Activated CD4-positive, alpha-beta memory T cell treated with anti-CD3 and anti-CD28 coated beads for 36 hours (primary cell): ENCODE measurements at regions of chr2 and their contacts with region 1.

Region 1: DNA sequence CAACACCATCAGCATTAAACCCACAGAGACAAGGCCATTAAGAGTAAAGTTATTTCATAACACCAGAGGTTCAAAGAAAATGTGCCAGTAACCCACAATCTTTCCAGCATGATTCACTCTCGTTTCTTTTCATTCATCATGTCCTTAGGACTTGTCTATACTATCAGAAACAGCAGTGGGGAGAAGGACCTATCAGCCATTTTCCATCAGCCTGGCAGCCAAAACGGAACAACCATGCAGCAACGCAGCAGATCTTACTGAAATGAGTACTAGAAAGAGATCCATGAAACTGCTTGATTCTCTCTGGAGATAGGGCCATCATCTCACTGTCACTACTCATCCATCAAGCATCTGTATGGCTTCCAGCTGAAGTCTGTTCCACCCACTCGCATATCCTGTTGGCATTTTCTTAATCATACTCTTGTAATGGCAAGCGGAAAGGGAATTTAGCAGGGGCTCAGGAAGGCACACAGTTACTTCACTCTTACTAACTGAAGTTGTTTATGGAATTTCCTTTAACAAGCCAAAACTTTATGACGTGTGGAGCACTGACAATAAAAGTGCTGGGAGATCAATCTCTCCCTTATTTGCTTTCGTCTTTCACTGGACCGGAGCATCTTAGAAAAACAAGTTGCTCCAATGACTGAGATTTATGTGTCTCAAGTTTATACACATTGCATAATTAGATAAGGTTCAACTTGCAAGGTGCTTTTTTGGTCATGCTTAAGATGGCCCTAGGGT is 69.7 kb downstream of the EPHA4 start:
- DNase-seq: peak; percentile 67
- H3K4me3 Mint-ChIP-seq: no peak overlapping the region
- H3K27ac Mint-ChIP-seq: peak overlapping the region; percentile 64
- H3K4me1 Mint-ChIP-seq: peaks cover 42% of the 10 kb centered on the region
- H3K27me3 Mint-ChIP-seq: no peaks in the 10 kb centered on the region

Region 2: DNA sequence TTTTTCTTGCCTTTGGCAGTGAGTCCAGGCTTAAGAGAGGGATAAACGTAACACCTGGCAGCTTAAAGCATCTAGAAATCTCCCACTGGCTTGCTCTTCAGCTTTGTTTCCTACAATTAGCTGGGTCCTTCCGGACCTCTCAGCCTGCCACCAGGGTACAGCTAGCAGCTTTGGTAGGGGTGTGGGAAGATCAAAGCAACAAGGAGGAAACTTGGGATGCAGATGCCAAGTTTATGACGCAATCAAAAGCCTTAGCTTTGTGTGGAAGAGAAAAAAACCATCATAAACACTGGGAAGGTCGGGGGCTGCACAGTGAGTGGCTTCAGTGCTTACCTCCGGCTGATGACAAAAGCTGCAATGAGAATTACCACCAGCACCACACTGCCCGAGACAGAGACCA is 47.2 kb before region 1 on chr2:
- CTCF ChIA-PET with region 1: no interaction called
- POLR2A ChIA-PET with region 1: no interaction called
- intact Hi-C with region 1: no loop called
- DNase-seq: no peak
- H3K4me3 Mint-ChIP-seq: no peak overlapping the region
- H3K27ac Mint-ChIP-seq: no peak overlapping the region
- H3K4me1 Mint-ChIP-seq: no peaks in the 10 kb centered on the region
- H3K27me3 Mint-ChIP-seq: no peaks in the 10 kb centered on the region

Region 3: DNA sequence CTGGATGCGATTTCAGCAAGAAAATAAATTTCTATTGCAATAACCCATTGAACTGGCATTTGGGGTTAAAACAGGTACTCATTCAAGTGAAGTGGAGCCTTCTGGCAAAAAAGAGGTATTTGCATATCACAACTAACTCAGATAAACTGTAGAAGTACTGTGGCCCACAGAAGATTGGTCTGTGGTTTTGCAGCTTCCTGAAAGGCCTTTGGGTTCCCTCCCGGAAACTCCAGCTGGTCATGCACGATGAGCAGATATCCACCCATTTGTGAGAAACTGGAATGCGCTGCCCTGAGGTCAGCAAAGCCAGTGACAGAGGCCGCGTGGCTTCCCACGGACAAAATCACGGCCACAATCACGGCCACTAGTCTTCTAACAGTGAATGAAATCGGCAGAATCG is 36.7 kb before region 1 on chr2:
- CTCF ChIA-PET with region 1: interaction called, 3 read pairs
- POLR2A ChIA-PET with region 1: no interaction called
- intact Hi-C with region 1: loop called (anchors 5 kb)
- DNase-seq: peak; percentile 14
- H3K4me3 Mint-ChIP-seq: no peak overlapping the region
- H3K27ac Mint-ChIP-seq: no peak overlapping the region
- H3K4me1 Mint-ChIP-seq: peaks cover 57% of the 10 kb centered on the region
- H3K27me3 Mint-ChIP-seq: no peaks in the 10 kb centered on the region

Region 4: DNA sequence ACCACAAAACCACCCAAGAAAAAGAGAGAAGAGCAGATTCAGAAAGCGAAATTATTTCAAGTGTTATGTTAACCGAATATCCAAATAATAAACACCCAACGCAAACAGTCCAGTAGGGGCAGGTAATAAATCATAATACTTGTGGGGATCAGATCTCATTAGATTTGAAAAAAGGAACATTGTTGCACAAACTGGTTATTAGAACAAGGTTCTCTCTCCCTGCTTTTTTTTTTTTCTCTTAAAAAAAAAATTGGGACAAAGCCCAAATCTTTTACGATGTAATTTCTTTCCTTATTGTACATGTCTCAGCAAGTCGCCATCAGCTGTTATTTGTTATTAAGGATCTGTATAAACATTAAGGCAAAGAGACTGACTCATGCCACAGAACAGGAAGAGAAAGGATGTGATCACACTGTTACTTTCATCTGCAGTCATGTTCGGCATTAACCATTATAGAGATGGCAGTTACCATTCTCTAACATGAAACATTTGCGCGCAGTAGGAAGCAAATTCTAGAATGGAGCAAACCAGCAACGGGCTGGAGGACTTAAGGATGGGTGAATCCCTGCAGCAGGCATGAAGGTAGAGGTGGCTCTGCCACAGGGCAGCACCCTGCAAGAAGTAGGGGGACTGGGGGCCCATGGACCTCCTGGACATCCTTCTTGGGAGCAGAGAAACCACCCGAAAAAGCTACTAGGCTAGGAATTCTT is 27.7 kb after region 1 on chr2:
- CTCF ChIA-PET with region 1: no interaction called
- POLR2A ChIA-PET with region 1: no interaction called
- intact Hi-C with region 1: loop called (anchors 1 kb)
- DNase-seq: no peak
- H3K4me3 Mint-ChIP-seq: peak overlapping the region; percentile 68
- H3K27ac Mint-ChIP-seq: peak overlapping the region; percentile 82
- H3K4me1 Mint-ChIP-seq: peaks cover 61% of the 10 kb centered on the region
- H3K27me3 Mint-ChIP-seq: no peaks in the 10 kb centered on the region

Region 5: GRCh38 chr2:221554769-221555493 is 52.5 kb after region 1 on chr2:
- CTCF ChIA-PET with region 1: no interaction called
- POLR2A ChIA-PET with region 1: no interaction called
- intact Hi-C with region 1: loop called (anchors 1 kb)
- DNase-seq: peak; percentile 58
- H3K4me3 Mint-ChIP-seq: peak overlapping the region; percentile 50
- H3K27ac Mint-ChIP-seq: peak overlapping the region; percentile 77
- H3K4me1 Mint-ChIP-seq: peaks cover 62% of the 10 kb centered on the region
- H3K27me3 Mint-ChIP-seq: no peaks in the 10 kb centered on the region

Region 6: GRCh38 chr2:221641181-221641871 is 138.9 kb after region 1 on chr2:
- CTCF ChIA-PET with region 1: no interaction called
- POLR2A ChIA-PET with region 1: no interaction called
- intact Hi-C with region 1: no loop called
- DNase-seq: no peak
- H3K4me3 Mint-ChIP-seq: no peak overlapping the region
- H3K27ac Mint-ChIP-seq: no peak overlapping the region
- H3K4me1 Mint-ChIP-seq: no peaks in the 10 kb centered on the region
- H3K27me3 Mint-ChIP-seq: peaks cover 6% of the 10 kb centered on the region